AG04450 (cell line): ENCODE measurements at regions of chr20 and their contacts with region 1.

Region 1: GRCh38 chr20:3820048-3820900 is at the start of gene AP5S1:
- DNase-seq: no peak
- H3K4me3 ChIP-seq: peak within 1 kb of the TSS; percentile 89
- H3K27ac ChIP-seq: peak within 1 kb of the TSS; percentile 97
- H3K27me3 ChIP-seq: no peaks in the 10 kb centered on the region
- CTCF ChIP-seq: peak; percentile 78
- polyA plus RNA-seq, gene AP5S1: 7.8 and 11.7 TPM in 2 replicates

Region 2: DNA sequence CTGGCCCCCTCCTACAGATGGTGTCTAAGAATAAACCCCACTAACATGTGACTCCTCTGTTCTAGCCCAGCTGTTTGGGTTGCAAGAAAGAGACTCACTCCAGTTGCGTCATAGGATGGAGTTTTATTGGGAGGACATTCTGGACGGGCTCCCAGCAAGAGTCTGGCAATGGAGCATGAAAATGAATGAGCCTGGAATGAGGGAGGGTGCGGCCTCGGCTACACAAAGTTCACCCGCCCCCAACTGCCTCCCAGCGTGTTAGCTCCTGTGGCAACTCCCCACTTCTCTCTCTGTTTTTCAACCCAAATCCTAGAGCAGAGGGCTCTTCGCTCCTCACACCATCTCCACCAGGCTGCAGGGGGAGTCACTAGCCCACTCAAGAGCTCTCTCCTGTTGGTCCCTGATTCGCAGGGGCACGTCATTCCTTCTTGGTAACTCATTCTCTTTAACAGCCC is 133.4 kb before region 1 on chr20:
- CTCF ChIA-PET with region 1: interaction called, 15 read pairs
- POLR2A ChIA-PET with region 1: no interaction called
- DNase-seq: peak; percentile 82
- H3K4me3 ChIP-seq: no peak overlapping the region
- H3K27ac ChIP-seq: peak overlapping the region; percentile 69
- H3K27me3 ChIP-seq: no peaks in the 10 kb centered on the region
- CTCF ChIP-seq: peak; percentile 33

Region 3: GRCh38 chr20:3767427-3768341 is 52.6 kb before region 1 on chr20 and contains the start of gene ADISSP:
- CTCF ChIA-PET with region 1: interaction called, 11 read pairs
- POLR2A ChIA-PET with region 1: interaction called, 7 read pairs
- DNase-seq: peak; percentile 95
- H3K4me3 ChIP-seq: peak within 1 kb of the TSS; percentile 84
- H3K27ac ChIP-seq: peak within 1 kb of the TSS; percentile 90
- H3K27me3 ChIP-seq: no peaks in the 10 kb centered on the region
- CTCF ChIP-seq: peak; percentile 28; the same call in 1 of the 2 replicates
- polyA plus RNA-seq, gene ADISSP: 22.6 and 29.2 TPM in 2 replicates

Region 4: GRCh38 chr20:3786665-3787323 is 33.5 kb before region 1 on chr20 and contains the start of gene CENPB:
- CTCF ChIA-PET with region 1: interaction called, 87 read pairs
- POLR2A ChIA-PET with region 1: interaction called, 19 read pairs
- DNase-seq: no peak
- H3K4me3 ChIP-seq: peak within 1 kb of the TSS; percentile 79
- H3K27ac ChIP-seq: peak within 1 kb of the TSS; percentile 21
- H3K27me3 ChIP-seq: no peaks in the 10 kb centered on the region
- CTCF ChIP-seq: peak; percentile 51
- polyA plus RNA-seq, gene CENPB: 29.7 and 37.0 TPM in 2 replicates

Region 5: GRCh38 chr20:3854462-3854871 is 34.2 kb after region 1 on chr20:
- CTCF ChIA-PET with region 1: interaction called, 13 read pairs
- POLR2A ChIA-PET with region 1: no interaction called
- DNase-seq: no peak
- H3K4me3 ChIP-seq: no peak overlapping the region
- H3K27ac ChIP-seq: no peak overlapping the region
- H3K27me3 ChIP-seq: no peaks in the 10 kb centered on the region
- CTCF ChIP-seq: no peak

Region 6: DNA sequence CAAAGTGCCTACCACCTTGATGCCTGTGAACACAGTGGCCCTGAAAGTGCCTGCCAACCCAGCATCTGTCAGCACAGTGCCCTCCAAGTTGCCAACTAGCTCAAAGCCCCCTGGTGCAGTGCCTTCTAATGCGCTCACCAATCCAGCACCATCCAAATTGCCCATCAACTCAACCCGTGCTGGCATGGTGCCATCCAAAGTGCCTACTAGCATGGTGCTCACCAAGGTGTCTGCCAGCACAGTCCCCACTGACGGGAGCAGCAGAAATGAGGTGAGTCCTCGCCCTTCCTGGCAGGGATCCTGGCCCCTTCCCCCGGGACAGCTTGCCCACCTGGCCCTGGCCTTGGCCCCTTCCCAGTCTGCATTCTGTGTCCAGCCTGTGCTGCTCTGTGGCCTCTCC is 44.2 kb after region 1 on chr20:
- CTCF ChIA-PET with region 1: no interaction called
- POLR2A ChIA-PET with region 1: no interaction called
- DNase-seq: no peak
- H3K4me3 ChIP-seq: no peak overlapping the region
- H3K27ac ChIP-seq: no peak overlapping the region
- H3K27me3 ChIP-seq: no peaks in the 10 kb centered on the region
- CTCF ChIP-seq: no peak